Heart left ventricle (tissue), 16 donors: ENCODE measurements at regions of chr2 and their contacts with region 1.

Region 1: GRCh38 chr2:111120253-111121027 is at the start of gene BCL2L11:
- DNase-seq: peak; percentile 91 to 95 (median 94)
- ATAC-seq: peak; percentile 67 to 89 (median 84)
- H3K4me3 ChIP-seq: peak within 1 kb of the TSS; percentile 64 to 98 (median 84)
- H3K27ac ChIP-seq: peak within 1 kb of the TSS in 11 of 12 donors; percentile 62 to 93 (median 80)
- H3K4me1 ChIP-seq: peaks cover 4 to 63% (median 49%) of the 10 kb centered on the region in 12 donors
- H3K27me3 ChIP-seq: peaks cover 0 to 46% (median 4%) of the 10 kb centered on the region in 9 donors
- CTCF ChIP-seq: peak in 8 of 12 donors; percentile 8 to 54 (median 22)
- POLR2A ChIP-seq: peak; percentile 73 to 95
- total RNA-seq, gene BCL2L11: 4.9 to 16.2 (median 7.3) TPM

Region 2: DNA sequence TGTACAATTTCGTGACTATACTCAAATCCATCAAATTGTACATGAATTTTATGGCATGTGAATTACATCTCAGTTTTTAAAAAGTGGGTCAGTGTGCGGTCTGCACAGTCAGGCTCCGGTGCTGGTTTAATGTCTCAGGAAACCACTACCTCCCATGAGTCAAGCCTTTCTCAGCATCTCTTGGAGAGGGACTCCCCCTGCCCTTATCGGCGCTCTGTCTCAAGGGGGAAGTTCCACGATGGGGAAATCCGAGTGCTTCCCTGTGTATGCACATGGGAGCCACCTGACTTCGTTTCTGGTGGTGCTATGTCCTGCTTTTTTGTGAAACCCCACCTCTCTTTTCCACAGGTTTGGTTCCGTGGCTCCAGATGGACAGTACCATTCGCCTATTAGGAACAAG is 315.5 kb before region 1 on chr2:
- intact Hi-C with region 1: loop called (anchors 5 to 10 kb)
- DNase-seq: no peak
- ATAC-seq: no peak
- H3K4me3 ChIP-seq: no peak overlapping the region
- H3K27ac ChIP-seq: no peak overlapping the region
- H3K4me1 ChIP-seq: peaks cover 0 to 14% (median 0%) of the 10 kb centered on the region in 12 donors
- H3K27me3 ChIP-seq: peaks cover 0 to 6% (median 0%) of the 10 kb centered on the region in 9 donors
- CTCF ChIP-seq: no peak
- POLR2A ChIP-seq: no peak

Region 3: DNA sequence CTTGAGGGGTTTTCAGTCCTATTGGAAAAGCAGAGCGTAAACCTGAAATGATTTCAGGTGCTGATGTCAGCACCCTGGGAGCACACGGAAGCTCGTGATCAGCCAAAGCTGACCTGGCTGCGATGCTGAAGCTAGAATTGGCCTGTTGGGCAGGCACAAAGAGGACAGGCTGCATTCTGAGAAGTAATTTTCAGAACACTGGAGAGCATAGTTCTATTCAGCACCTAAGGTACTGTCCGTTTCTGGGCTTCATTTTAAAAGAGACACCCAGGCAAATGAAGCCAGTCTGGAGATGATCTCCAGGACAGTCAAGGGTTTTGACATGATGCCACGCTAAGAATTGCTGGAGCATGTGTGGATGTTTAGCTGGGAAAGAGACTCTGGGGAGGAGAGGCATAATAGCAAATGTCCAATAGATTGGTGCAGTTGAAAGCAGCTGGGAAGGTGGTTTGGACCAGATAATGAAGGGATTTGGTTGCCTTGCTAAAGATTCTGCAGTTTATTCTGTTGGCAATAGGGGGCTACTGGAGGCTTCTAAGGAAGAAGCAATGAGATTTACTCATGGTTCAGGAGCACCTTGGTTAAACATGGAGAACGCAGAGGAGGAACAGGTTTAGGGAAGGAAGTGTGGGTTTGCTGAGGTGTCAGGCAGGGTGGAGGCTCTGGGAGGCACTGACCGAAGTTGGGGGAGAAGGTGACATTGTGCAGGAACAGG is 301.5 kb before region 1 on chr2:
- intact Hi-C with region 1: loop called in 9 of 10 experiments (anchors 5 to 10 kb)
- DNase-seq: no peak
- ATAC-seq: no peak
- H3K4me3 ChIP-seq: no peak overlapping the region
- H3K27ac ChIP-seq: no peak overlapping the region
- H3K4me1 ChIP-seq: no peaks in the 10 kb centered on the region
- H3K27me3 ChIP-seq: peaks cover 0 to 5% (median 0%) of the 10 kb centered on the region in 9 donors
- CTCF ChIP-seq: no peak
- POLR2A ChIP-seq: no peak

Region 4: DNA sequence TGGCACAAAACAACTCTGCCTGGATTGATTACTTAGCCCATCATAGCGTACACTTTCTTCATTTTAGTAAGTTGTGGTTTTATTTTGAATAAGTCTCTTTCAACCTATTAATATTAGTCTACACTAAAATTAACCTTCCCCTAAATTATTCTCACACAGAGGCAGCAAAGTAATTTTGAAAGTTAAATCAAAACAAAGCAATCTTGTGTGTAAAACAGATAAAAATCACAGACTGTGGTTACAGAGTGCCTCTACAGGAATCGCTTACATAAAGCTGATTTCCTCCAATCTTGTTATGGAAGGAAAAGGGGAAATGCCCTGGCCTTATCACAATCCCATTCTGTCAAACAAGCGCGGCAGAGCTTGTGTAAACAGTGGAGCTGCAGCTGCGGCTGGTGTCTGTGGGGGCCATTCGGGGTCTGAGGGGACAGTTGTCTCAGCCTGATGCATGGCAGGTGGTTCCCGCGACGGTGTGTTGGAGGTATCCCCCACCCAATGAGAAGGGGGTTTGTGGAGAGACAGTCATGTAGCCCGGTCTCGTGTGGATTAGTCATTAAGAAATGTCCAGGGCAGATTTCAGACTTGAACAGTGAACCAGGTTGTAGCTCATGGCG is 42.4 kb after region 1 on chr2:
- intact Hi-C with region 1: loop called in 3 of 10 experiments (anchors 5 kb)
- DNase-seq: no peak
- ATAC-seq: no peak
- H3K4me3 ChIP-seq: no peak overlapping the region
- H3K27ac ChIP-seq: no peak overlapping the region
- H3K4me1 ChIP-seq: peaks cover 0 to 47% (median 34%) of the 10 kb centered on the region in 12 donors
- H3K27me3 ChIP-seq: no peaks in the 10 kb centered on the region
- CTCF ChIP-seq: no peak
- POLR2A ChIP-seq: no peak

Region 5: GRCh38 chr2:111679202-111679601 is 558.8 kb after region 1 on chr2:
- intact Hi-C with region 1: no loop called
- DNase-seq: no peak
- ATAC-seq: no peak
- H3K4me3 ChIP-seq: no peak overlapping the region
- H3K27ac ChIP-seq: no peak overlapping the region
- H3K4me1 ChIP-seq: peaks cover 0 to 39% (median 0%) of the 10 kb centered on the region in 12 donors
- H3K27me3 ChIP-seq: no peaks in the 10 kb centered on the region
- CTCF ChIP-seq: no peak
- POLR2A ChIP-seq: no peak

Region 6: GRCh38 chr2:111705711-111706336 is 585.4 kb after region 1 on chr2:
- intact Hi-C with region 1: loop called in 5 of 10 experiments (anchors 5 to 10 kb)
- DNase-seq: no peak
- ATAC-seq: peak in 2 of 4 donors; percentile 23 to 45
- H3K4me3 ChIP-seq: no peak overlapping the region
- H3K27ac ChIP-seq: no peak overlapping the region
- H3K4me1 ChIP-seq: peaks cover 0 to 30% (median 9%) of the 10 kb centered on the region in 12 donors
- H3K27me3 ChIP-seq: no peaks in the 10 kb centered on the region
- CTCF ChIP-seq: no peak
- POLR2A ChIP-seq: no peak